Activated CD4-positive, alpha-beta memory T cell treated with anti-CD3 and anti-CD28 coated beads for 36 hours (primary cell): ENCODE measurements at regions of chr17 and their contacts with region 1.

Region 1: DNA sequence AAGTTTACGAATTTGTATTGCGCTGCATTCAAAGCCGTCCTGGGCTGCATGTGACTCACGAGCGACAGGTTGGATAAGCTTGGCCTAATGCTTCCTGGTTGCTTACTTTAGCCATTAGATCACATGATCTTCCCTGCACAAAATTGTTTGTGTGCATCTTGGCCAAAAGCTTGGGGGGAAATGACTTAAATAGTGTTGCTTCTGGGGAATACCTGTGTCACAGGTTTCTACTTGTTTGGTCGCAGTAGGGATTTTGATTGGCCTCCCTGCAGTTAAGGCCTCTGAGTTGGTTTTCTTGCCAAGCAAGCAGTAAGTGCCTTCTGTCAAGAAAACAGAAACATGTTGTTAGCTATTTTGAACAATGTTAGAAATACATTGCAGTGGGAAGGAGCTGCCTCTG is 39.6 kb upstream of the DUSP14 start:
- DNase-seq: no peak
- H3K4me3 Mint-ChIP-seq: no peak overlapping the region
- H3K27ac Mint-ChIP-seq: no peak overlapping the region
- H3K4me1 Mint-ChIP-seq: peaks cover 5% of the 10 kb centered on the region
- H3K27me3 Mint-ChIP-seq: no peaks in the 10 kb centered on the region

Region 2: GRCh38 chr17:37438141-37438540 is 12.0 kb before region 1 on chr17:
- CTCF ChIA-PET with region 1: interaction called, 12 read pairs
- POLR2A ChIA-PET with region 1: no interaction called
- intact Hi-C with region 1: no loop called
- DNase-seq: no peak
- H3K4me3 Mint-ChIP-seq: no peak overlapping the region
- H3K27ac Mint-ChIP-seq: no peak overlapping the region
- H3K4me1 Mint-ChIP-seq: peaks cover 4% of the 10 kb centered on the region
- H3K27me3 Mint-ChIP-seq: no peaks in the 10 kb centered on the region